CD4-positive, alpha-beta T cell (primary cell): ENCODE measurements at regions of chr6 and their contacts with region 1.

Region 1: GRCh38 chr6:26122793-26123674 is 35.8 kb downstream of the HFE start:
- DNase-seq: peak; percentile 75 to 98 (median 92)
- ATAC-seq: peak; percentile 56
- H3K4me3 ChIP-seq: peak overlapping the region; percentile 88
- H3K4me3 Mint-ChIP-seq: peak overlapping the region; percentile 97
- H3K27ac ChIP-seq: peak overlapping the region; percentile 84 to 95
- H3K27ac Mint-ChIP-seq: peak overlapping the region; percentile 98
- H3K4me1 ChIP-seq: peaks cover 23% of the 10 kb centered on the region
- H3K4me1 Mint-ChIP-seq: peaks cover 41% of the 10 kb centered on the region
- H3K27me3 ChIP-seq: no peaks in the 10 kb centered on the region
- H3K27me3 Mint-ChIP-seq: peaks cover 13% of the 10 kb centered on the region
- CTCF ChIP-seq: no peak

Region 2: DNA sequence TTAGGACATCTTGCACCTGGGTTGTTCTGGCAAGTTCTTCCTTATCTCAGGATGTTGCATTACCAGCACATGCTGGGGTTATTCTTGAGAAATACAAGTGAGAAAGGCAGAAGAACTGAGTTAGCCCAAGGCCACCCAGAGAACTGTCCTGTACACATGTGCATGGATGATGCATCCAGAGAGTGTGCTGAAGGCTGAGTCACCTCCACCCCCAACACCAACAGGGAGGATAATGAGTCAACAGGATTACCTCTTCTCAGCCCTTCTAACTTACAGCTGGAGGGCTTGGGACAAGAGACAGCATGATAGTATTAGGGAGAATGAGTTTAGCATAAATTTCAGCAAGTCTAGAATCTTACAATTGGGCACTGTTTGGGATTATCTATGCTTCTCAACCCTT is 462.5 kb before region 1 on chr6:
- CTCF ChIA-PET with region 1: no interaction called
- POLR2A ChIA-PET with region 1: no interaction called
- intact Hi-C with region 1: no loop called
- DNase-seq: no peak
- ATAC-seq: no peak
- H3K4me3 ChIP-seq: no peak overlapping the region
- H3K4me3 Mint-ChIP-seq: no peak overlapping the region
- H3K27ac ChIP-seq: no peak overlapping the region
- H3K27ac Mint-ChIP-seq: no peak overlapping the region
- H3K4me1 ChIP-seq: no peaks in the 10 kb centered on the region
- H3K4me1 Mint-ChIP-seq: no peaks in the 10 kb centered on the region
- H3K27me3 ChIP-seq: peaks cover 18 to 20% of the 10 kb centered on the region in 2 experiments
- H3K27me3 Mint-ChIP-seq: peaks cover 81% of the 10 kb centered on the region
- CTCF ChIP-seq: no peak

Region 3: DNA sequence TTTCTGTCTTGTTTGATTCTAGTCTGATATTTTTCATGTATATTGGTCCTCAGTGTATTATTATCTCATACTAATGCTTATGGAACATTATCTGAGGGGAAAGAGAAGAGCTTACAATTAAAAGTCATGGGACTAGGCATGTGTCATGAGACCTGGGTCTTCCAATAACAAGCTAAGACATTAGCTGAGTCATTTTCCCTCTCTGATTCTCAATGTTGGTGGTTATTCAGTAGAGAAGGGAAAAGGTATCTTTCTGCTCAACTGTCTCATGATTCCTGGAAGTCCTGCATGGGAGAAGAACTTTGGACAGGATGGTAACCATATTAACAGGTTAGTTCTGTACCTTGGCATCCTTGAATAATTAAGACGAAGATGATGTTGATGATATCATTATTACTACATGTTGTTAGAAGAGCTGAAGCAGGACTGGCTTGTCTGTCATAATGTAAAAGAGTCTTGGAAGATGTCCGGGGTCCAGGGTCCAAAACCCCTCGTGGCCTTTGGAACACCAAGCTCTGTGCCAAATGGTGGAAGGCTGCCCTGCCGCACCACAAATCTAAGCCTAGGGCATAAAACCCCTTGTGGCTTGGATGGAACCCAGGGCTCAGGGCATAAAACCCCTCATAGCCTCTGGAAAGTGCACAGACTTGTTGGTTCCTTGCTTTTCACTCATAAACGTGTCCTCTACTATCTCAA is 141.3 kb before region 1 on chr6:
- CTCF ChIA-PET with region 1: no interaction called
- POLR2A ChIA-PET with region 1: no interaction called
- intact Hi-C with region 1: no loop called
- DNase-seq: no peak
- ATAC-seq: no peak
- H3K4me3 ChIP-seq: no peak overlapping the region
- H3K4me3 Mint-ChIP-seq: no peak overlapping the region
- H3K27ac ChIP-seq: no peak overlapping the region
- H3K27ac Mint-ChIP-seq: no peak overlapping the region
- H3K4me1 ChIP-seq: no peaks in the 10 kb centered on the region
- H3K4me1 Mint-ChIP-seq: peaks cover 19% of the 10 kb centered on the region
- H3K27me3 ChIP-seq: no peaks in the 10 kb centered on the region
- H3K27me3 Mint-ChIP-seq: no peaks in the 10 kb centered on the region
- CTCF ChIP-seq: no peak

Region 4: DNA sequence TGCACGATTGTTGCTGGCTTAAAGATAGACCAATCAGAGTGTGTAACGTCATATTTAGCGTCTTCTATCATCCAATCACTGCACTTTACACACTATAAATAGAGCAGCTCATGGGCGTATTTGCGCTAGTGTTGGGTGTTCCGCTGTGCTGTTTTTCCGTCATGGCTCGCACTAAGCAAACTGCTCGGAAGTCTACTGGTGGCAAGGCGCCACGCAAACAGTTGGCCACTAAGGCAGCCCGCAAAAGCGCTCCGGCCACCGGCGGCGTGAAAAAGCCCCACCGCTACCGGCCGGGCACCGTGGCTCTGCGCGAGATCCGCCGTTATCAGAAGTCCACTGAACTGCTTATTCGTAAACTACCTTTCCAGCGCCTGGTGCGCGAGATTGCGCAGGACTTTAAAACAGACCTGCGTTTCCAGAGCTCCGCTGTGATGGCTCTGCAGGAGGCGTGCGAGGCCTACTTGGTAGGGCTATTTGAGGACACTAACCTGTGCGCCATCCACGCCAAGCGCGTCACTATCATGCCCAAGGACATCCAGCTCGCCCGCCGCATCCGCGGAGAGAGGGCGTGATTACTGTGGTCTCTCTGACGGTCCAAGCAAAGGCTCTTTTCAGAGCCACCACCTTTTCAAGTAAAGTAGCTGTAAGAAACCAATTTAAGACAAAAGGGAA is 102.6 kb before region 1 on chr6:
- CTCF ChIA-PET with region 1: no interaction called
- POLR2A ChIA-PET with region 1: interaction called, 185 read pairs
- intact Hi-C with region 1: no loop called
- DNase-seq: peak; percentile 63 to 96 (median 78)
- ATAC-seq: peak; percentile 50
- H3K4me3 ChIP-seq: peak overlapping the region; percentile 73
- H3K4me3 Mint-ChIP-seq: peak overlapping the region; percentile 95
- H3K27ac ChIP-seq: peak overlapping the region; percentile 95 to 96
- H3K27ac Mint-ChIP-seq: peak overlapping the region; percentile 97
- H3K4me1 ChIP-seq: peaks cover 38% of the 10 kb centered on the region
- H3K4me1 Mint-ChIP-seq: peaks cover 41% of the 10 kb centered on the region
- H3K27me3 ChIP-seq: no peaks in the 10 kb centered on the region
- H3K27me3 Mint-ChIP-seq: no peaks in the 10 kb centered on the region
- CTCF ChIP-seq: no peak

Region 5: GRCh38 chr6:26065952-26066380 is 57.1 kb before region 1 on chr6:
- CTCF ChIA-PET with region 1: interaction called, 4 read pairs
- POLR2A ChIA-PET with region 1: interaction called, 26 read pairs
- intact Hi-C with region 1: no loop called
- DNase-seq: peak in 11 of 14 experiments; percentile 14 to 87 (median 39)
- ATAC-seq: peak; percentile 93
- H3K4me3 ChIP-seq: no peak overlapping the region
- H3K4me3 Mint-ChIP-seq: no peak overlapping the region
- H3K27ac ChIP-seq: no peak overlapping the region
- H3K27ac Mint-ChIP-seq: no peak overlapping the region
- H3K4me1 ChIP-seq: peaks cover 3% of the 10 kb centered on the region
- H3K4me1 Mint-ChIP-seq: peaks cover 11% of the 10 kb centered on the region
- H3K27me3 ChIP-seq: no peaks in the 10 kb centered on the region
- H3K27me3 Mint-ChIP-seq: no peaks in the 10 kb centered on the region
- CTCF ChIP-seq: peak; percentile 85

Region 6: GRCh38 chr6:26175428-26176181 is 52.6 kb after region 1 on chr6:
- CTCF ChIA-PET with region 1: interaction called, 4 read pairs
- POLR2A ChIA-PET with region 1: interaction called, 320 read pairs
- intact Hi-C with region 1: no loop called
- DNase-seq: peak in 11 of 14 experiments; percentile 13 to 85 (median 54)
- ATAC-seq: no peak
- H3K4me3 ChIP-seq: no peak overlapping the region
- H3K4me3 Mint-ChIP-seq: peak overlapping the region; percentile 83
- H3K27ac ChIP-seq: peak overlapping the region in 1 of 2 donors; percentile 41
- H3K27ac Mint-ChIP-seq: peak overlapping the region; percentile 93
- H3K4me1 ChIP-seq: peaks cover 17% of the 10 kb centered on the region
- H3K4me1 Mint-ChIP-seq: peaks cover 53% of the 10 kb centered on the region
- H3K27me3 ChIP-seq: no peaks in the 10 kb centered on the region
- H3K27me3 Mint-ChIP-seq: no peaks in the 10 kb centered on the region
- CTCF ChIP-seq: peak; percentile 87

Region 7: DNA sequence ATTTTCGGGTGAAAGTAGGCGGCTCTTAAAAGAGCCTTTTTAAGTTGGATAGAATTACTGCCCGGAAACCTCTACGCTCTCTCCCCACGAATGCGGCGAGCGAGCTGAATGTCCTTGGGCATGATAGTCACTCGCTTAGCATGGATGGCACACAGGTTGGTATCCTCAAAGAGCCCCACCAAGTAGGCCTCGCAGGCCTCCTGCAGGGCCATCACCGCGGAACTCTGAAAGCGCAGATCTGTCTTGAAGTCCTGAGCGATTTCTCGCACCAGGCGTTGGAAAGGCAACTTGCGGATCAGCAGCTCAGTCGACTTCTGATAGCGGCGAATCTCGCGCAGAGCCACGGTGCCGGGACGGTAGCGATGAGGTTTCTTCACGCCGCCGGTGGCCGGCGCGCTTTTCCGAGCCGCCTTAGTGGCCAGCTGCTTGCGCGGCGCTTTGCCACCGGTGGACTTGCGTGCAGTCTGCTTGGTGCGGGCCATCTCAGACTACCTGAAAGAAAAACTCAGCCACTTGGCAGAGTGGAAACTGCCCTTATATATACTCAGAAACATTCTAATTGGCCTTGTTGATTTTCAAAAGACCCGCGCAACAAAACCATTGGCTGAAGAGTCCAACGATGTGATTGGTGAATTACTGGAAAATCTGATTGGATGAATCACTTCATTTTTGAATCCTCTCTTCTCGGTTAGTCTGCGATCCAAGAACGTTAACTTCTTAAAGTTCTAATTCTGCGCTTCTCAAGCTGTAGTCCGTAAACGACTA is 148.1 kb after region 1 on chr6:
- CTCF ChIA-PET with region 1: interaction called, 4 read pairs
- POLR2A ChIA-PET with region 1: interaction called, 176 read pairs
- intact Hi-C with region 1: no loop called
- DNase-seq: peak; percentile 60 to 92 (median 75)
- ATAC-seq: peak; percentile 25
- H3K4me3 ChIP-seq: peak overlapping the region; percentile 59
- H3K4me3 Mint-ChIP-seq: no peak overlapping the region
- H3K27ac ChIP-seq: peak overlapping the region; percentile 82 to 84
- H3K27ac Mint-ChIP-seq: no peak overlapping the region
- H3K4me1 ChIP-seq: peaks cover 28% of the 10 kb centered on the region
- H3K4me1 Mint-ChIP-seq: peaks cover 7% of the 10 kb centered on the region
- H3K27me3 ChIP-seq: no peaks in the 10 kb centered on the region
- H3K27me3 Mint-ChIP-seq: no peaks in the 10 kb centered on the region
- CTCF ChIP-seq: no peak

Region 8: GRCh38 chr6:27132532-27133280 is 1009.7 kb after region 1 on chr6:
- CTCF ChIA-PET with region 1: no interaction called
- POLR2A ChIA-PET with region 1: interaction called, 62 read pairs
- intact Hi-C with region 1: loop called in 1 of 2 experiments (anchors 2 kb)
- DNase-seq: peak; percentile 80 to 99 (median 88)
- ATAC-seq: peak; percentile 79
- H3K4me3 ChIP-seq: peak overlapping the region; percentile 75
- H3K4me3 Mint-ChIP-seq: no peak overlapping the region
- H3K27ac ChIP-seq: peak overlapping the region; percentile 79 to 81
- H3K27ac Mint-ChIP-seq: no peak overlapping the region
- H3K4me1 ChIP-seq: peaks cover 31% of the 10 kb centered on the region
- H3K4me1 Mint-ChIP-seq: peaks cover 12% of the 10 kb centered on the region
- H3K27me3 ChIP-seq: no peaks in the 10 kb centered on the region
- H3K27me3 Mint-ChIP-seq: no peaks in the 10 kb centered on the region
- CTCF ChIP-seq: no peak

Region 9: DNA sequence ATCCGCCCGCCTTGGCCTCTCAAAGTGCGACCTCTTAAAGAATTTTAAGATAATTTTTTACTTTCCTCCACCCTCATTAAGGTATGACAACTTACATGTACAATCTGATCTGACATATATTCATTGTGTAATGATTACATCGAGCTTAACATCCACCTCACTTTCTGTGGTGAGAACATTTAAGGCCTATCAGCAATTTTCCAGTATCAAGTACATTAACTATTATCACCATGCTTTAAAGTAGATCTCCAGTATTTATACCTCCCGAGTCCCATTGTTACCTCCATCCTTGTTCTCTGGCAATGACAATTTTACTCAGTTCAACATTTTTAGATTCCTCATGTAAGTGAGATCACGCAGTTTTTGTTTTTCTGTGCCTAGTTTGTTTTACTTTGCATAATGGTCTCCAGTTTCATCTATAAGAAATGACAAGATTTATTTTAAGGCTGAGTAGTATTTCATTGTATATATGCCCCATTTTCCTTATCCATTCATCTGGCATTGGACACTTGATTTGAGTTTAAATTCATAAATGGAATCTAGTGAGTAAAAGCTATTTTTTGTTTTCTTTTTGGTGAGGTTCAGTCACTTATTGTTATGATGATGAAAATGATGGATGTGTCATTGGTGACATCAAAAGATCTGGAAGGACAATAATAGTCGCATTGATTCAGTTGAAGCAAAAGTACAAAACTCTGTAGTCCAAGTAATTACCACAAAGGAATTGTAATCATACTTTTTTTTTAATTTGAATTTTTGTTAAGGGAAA is 1702.2 kb after region 1 on chr6:
- CTCF ChIA-PET with region 1: no interaction called
- POLR2A ChIA-PET with region 1: interaction called, 19 read pairs
- intact Hi-C with region 1: loop called in 1 of 2 experiments (anchors 10 kb)
- DNase-seq: peak in 2 of 14 experiments; percentile 27 to 38
- ATAC-seq: no peak
- H3K4me3 ChIP-seq: peak overlapping the region; percentile 82
- H3K4me3 Mint-ChIP-seq: peak overlapping the region; percentile 90
- H3K27ac ChIP-seq: peak overlapping the region; percentile 77 to 87
- H3K27ac Mint-ChIP-seq: peak overlapping the region; percentile 99
- H3K4me1 ChIP-seq: peaks cover 8% of the 10 kb centered on the region
- H3K4me1 Mint-ChIP-seq: peaks cover 38% of the 10 kb centered on the region
- H3K27me3 ChIP-seq: no peaks in the 10 kb centered on the region
- H3K27me3 Mint-ChIP-seq: no peaks in the 10 kb centered on the region
- CTCF ChIP-seq: no peak